Activated CD8-positive, alpha-beta T cell treated with anti-CD3 and anti-CD28 coated beads, Interleukin-2, amount 10 ng/mL, durations not matched to agents 7 days and 5 days (primary cell): ENCODE measurements at regions of chr1 and their contacts with region 1.

Region 1: GRCh38 chr1:153946622-153947241 is at the start of gene DENND4B:
- DNase-seq: peak; percentile 81
- ATAC-seq: peak; percentile 66
- H3K4me3 Mint-ChIP-seq: peak within 1 kb of the TSS; percentile 96
- H3K27ac Mint-ChIP-seq: peak within 1 kb of the TSS; percentile 97
- H3K4me1 Mint-ChIP-seq: peaks cover 32% of the 10 kb centered on the region
- H3K27me3 Mint-ChIP-seq: no peaks in the 10 kb centered on the region
- total RNA-seq, gene DENND4B: 140 to 143 TPM

Region 2: GRCh38 chr1:153958111-153958960 is 11.6 kb after region 1 on chr1 and contains the start of gene CRTC2:
- CTCF ChIA-PET with region 1: interaction called, 48 read pairs
- POLR2A ChIA-PET with region 1: interaction called, 63 read pairs
- DNase-seq: peak; percentile 99
- ATAC-seq: peak; percentile 87
- H3K4me3 Mint-ChIP-seq: peak within 1 kb of the TSS; percentile 95
- H3K27ac Mint-ChIP-seq: peak within 1 kb of the TSS; percentile 94
- H3K4me1 Mint-ChIP-seq: peaks cover 70% of the 10 kb centered on the region
- H3K27me3 Mint-ChIP-seq: no peaks in the 10 kb centered on the region
- total RNA-seq, gene CRTC2: 85.1 to 104 TPM

Region 3: GRCh38 chr1:153967082-153968000 is 20.6 kb after region 1 on chr1 and contains the start of gene CREB3L4:
- CTCF ChIA-PET with region 1: interaction called, 43 read pairs
- POLR2A ChIA-PET with region 1: interaction called, 34 read pairs
- DNase-seq: peak; percentile 91
- ATAC-seq: peak; percentile 88
- H3K4me3 Mint-ChIP-seq: peak within 1 kb of the TSS; percentile 86
- H3K27ac Mint-ChIP-seq: peak within 1 kb of the TSS; percentile 93
- H3K4me1 Mint-ChIP-seq: peaks cover 58% of the 10 kb centered on the region
- H3K27me3 Mint-ChIP-seq: no peaks in the 10 kb centered on the region
- total RNA-seq, gene CREB3L4: 5.7 to 9.0 TPM

Region 4: GRCh38 chr1:153977250-153978240 is 30.8 kb after region 1 on chr1 and contains the start of gene JTB:
- CTCF ChIA-PET with region 1: interaction called, 23 read pairs
- POLR2A ChIA-PET with region 1: interaction called, 26 read pairs
- DNase-seq: peak; percentile 91
- ATAC-seq: peak; percentile 96
- H3K4me3 Mint-ChIP-seq: peak within 1 kb of the TSS; percentile 97
- H3K27ac Mint-ChIP-seq: peak within 1 kb of the TSS; percentile 93
- H3K4me1 Mint-ChIP-seq: peaks cover 48% of the 10 kb centered on the region
- H3K27me3 Mint-ChIP-seq: no peaks in the 10 kb centered on the region
- total RNA-seq, gene JTB: 133 to 140 TPM

Region 5: DNA sequence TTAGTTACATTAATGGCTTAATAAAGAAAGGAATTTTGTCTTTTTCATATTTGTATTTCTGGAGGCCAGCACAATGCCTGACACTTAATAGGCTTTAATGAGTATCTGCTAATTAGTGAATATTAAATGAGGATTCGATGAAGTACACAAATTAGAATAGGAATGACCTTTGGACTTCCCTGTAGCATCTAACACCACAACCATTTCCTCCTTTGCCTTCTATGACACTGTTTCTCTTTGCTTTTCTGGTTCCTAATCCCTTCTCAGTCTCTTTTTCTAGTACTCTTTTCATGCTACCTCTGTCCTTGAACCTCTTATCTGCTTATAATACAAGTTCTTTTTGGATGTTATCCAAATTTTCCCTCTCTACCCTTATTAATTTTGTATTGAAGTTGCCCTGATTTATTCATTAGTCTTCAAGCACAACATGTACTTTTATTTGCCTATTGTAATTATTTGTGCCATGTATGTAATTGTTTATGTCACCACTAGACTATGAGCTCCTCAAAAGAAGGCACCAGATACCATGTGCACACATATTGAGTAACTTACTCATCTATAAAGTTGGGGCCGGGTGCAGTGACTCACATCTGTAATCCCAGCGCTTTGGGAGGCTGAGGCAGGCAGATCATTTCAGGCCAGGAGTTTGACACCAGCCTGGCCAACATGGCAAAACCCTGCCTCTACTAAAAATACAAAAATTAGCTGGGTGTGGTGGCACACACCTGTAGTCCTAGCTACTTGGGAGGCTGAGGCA is 67.6 kb after region 1 on chr1:
- CTCF ChIA-PET with region 1: no interaction called
- POLR2A ChIA-PET with region 1: no interaction called
- DNase-seq: no peak
- ATAC-seq: no peak
- H3K4me3 Mint-ChIP-seq: no peak overlapping the region
- H3K27ac Mint-ChIP-seq: no peak overlapping the region
- H3K4me1 Mint-ChIP-seq: no peaks in the 10 kb centered on the region
- H3K27me3 Mint-ChIP-seq: no peaks in the 10 kb centered on the region